Lower leg skin (tissue), 4 donors: ENCODE measurements at regions of chr7 and their contacts with region 1.

Region 1: DNA sequence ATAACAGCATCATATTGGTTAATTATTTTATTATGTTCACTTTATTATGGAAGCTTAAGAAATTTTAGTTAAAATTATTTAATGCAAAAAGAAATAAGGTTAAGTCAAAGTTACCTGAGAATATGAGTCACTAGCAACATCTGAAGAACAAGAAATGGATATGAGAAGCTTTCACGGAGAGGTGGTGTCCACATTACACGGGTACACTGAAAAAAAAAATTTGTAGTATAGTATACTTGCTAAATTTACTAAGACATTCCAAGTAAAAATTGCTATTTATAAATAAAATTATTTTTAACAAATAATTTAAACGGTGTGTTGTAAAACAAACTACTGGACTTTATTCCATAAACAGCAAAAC is 63.9 kb downstream of the DPY19L1 start:
- DNase-seq: no peak
- H3K4me3 ChIP-seq: no peak overlapping the region
- CTCF ChIP-seq: no peak
- POLR2A ChIP-seq: no peak

Region 2: GRCh38 chr7:35003679-35004303 is 30.4 kb after region 1 on chr7:
- intact Hi-C with region 1: loop called (anchors 1 kb)
- DNase-seq: no peak
- H3K4me3 ChIP-seq: no peak overlapping the region
- CTCF ChIP-seq: no peak
- POLR2A ChIP-seq: no peak